ENCODE measurements at regions of chr2 and their contacts with region 1.

Region 1: GRCh38 chr2:174083843-174084458 is 118.8 kb upstream of the SP3 start:
- DNase-seq: no peak
- H3K4me3 ChIP-seq: no peak overlapping the region
- H3K27ac ChIP-seq: no peak overlapping the region
- H3K4me1 ChIP-seq: no peaks in the 10 kb centered on the region
- H3K27me3 ChIP-seq: no peaks in the 10 kb centered on the region
- CTCF ChIP-seq: no peak
- EP300 ChIP-seq: no peak
- POLR2A ChIP-seq: no peak

Region 2: DNA sequence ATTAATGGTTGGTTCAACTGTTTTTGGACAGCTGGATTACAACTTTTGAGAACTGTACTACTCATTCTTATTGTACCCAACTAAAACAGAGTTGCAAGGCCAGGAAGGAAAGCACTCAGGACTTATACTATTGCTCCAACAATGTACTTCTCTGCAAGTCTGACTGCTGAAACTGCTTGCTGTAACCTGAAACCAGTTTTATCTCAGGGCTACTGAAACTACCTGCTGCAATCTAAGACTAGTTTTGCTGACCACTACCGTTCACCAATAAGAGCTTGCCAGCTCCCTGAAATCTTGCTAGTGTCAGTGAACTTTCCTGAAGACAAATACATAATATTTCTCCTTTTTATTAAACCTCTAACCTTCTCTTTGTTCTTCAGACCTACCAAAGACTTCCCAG is 572.0 kb before region 1 on chr2:
- in situ Hi-C with region 1: no loop called
- intact Hi-C with region 1: no loop called
- DNase-seq: no peak
- H3K4me3 ChIP-seq: no peak overlapping the region
- H3K27ac ChIP-seq: no peak overlapping the region
- H3K4me1 ChIP-seq: peaks cover 0 to 4% (median 0%) of the 10 kb centered on the region in 4 donors
- H3K27me3 ChIP-seq: no peaks in the 10 kb centered on the region
- CTCF ChIP-seq: no peak
- EP300 ChIP-seq: no peak
- POLR2A ChIP-seq: no peak

Region 3: GRCh38 chr2:174059178-174059874 is 24.6 kb before region 1 on chr2:
- in situ Hi-C with region 1: no loop called
- intact Hi-C with region 1: loop called (anchors 1 kb)
- DNase-seq: no peak
- H3K4me3 ChIP-seq: no peak overlapping the region
- H3K27ac ChIP-seq: peak overlapping the region in 1 of 4 donors; percentile 8
- H3K4me1 ChIP-seq: no peaks in the 10 kb centered on the region
- H3K27me3 ChIP-seq: no peaks in the 10 kb centered on the region
- CTCF ChIP-seq: no peak
- EP300 ChIP-seq: no peak
- POLR2A ChIP-seq: no peak

Region 4: GRCh38 chr2:174067815-174068214 is 16.1 kb before region 1 on chr2:
- in situ Hi-C with region 1: no loop called
- intact Hi-C with region 1: loop called (anchors 2 kb)
- DNase-seq: no peak
- H3K4me3 ChIP-seq: no peak overlapping the region
- H3K27ac ChIP-seq: no peak overlapping the region
- H3K4me1 ChIP-seq: no peaks in the 10 kb centered on the region
- H3K27me3 ChIP-seq: no peaks in the 10 kb centered on the region
- CTCF ChIP-seq: no peak
- EP300 ChIP-seq: no peak
- POLR2A ChIP-seq: no peak

Measured in transverse colon (tissue), 4 donors.